Endothelial cell of umbilical vein (primary cell): ENCODE measurements at regions of chr14 and their contacts with region 1.

Region 1: GRCh38 chr14:69242311-69243224 is 17.4 kb upstream of the GALNT16 start:
- DNase-seq: peak; percentile 71
- H3K4me3 ChIP-seq: no peak overlapping the region
- H3K27ac ChIP-seq: no peak overlapping the region
- H3K4me1 ChIP-seq: no peaks in the 10 kb centered on the region
- H3K27me3 ChIP-seq: no peaks in the 10 kb centered on the region
- CTCF ChIP-seq: peak; percentile 59 to 60
- POLR2A ChIP-seq: no peak

Region 2: GRCh38 chr14:69288011-69288771 is 45.6 kb after region 1 on chr14:
- CTCF ChIA-PET with region 1: interaction called, 17 read pairs
- POLR2A ChIA-PET with region 1: no interaction called
- dilution Hi-C with region 1: no loop called
- intact Hi-C with region 1: loop called (anchors 5 kb)
- DNase-seq: peak; percentile 46
- H3K4me3 ChIP-seq: no peak overlapping the region
- H3K27ac ChIP-seq: no peak overlapping the region
- H3K4me1 ChIP-seq: no peaks in the 10 kb centered on the region
- H3K27me3 ChIP-seq: no peaks in the 10 kb centered on the region
- CTCF ChIP-seq: peak; percentile 9 to 20
- POLR2A ChIP-seq: no peak

Region 3: DNA sequence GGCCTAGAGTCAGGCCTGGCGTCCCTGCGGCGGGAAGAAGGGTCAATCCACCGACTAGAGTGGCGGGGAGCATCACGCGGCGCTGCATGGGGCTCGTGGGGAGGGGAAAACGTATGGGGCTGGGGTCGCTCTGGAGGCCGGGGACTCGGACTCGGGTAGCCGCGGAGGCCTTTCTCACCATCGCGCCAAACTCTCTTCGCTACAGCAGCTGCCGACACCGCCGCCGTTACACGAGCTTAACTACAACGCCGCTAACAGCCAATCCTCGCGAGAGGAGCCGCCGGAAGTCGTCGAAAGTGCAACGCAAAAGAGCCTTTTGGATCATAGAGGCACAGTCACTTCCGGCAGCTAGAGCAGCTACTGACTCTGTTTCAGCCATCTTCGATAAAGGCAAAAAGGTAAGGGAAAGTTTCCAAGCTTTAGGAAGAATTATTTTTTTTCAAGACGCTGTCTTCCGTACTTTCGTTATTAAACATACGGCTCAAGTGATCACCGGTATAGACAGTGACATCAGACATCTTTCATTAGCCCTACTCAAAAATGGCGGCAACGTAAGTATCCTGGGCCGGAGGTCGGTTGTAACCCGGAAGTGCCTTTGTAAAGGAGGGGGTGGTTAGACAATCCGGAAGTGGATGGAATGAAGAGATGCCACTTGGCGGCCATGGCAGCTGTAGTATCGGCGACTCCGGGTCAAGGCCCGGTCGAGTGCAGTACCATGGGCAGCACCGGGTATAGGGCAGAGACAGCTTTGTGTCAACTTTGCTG is 155.7 kb after region 1 on chr14 and contains the starts of genes ERH and SLC39A9:
- CTCF ChIA-PET with region 1: no interaction called
- POLR2A ChIA-PET with region 1: no interaction called
- dilution Hi-C with region 1: no loop called
- intact Hi-C with region 1: loop called (anchors 5 kb)
- DNase-seq: peak; percentile 98
- H3K4me3 ChIP-seq: peak within 1 kb of the TSS; percentile 13 to 100 (median 84)
- H3K27ac ChIP-seq: peak within 1 kb of the TSS; percentile 92
- H3K4me1 ChIP-seq: peaks cover 31% of the 10 kb centered on the region
- H3K27me3 ChIP-seq: no peaks in the 10 kb centered on the region
- CTCF ChIP-seq: no peak
- POLR2A ChIP-seq: peak; percentile 84
- total RNA-seq, gene ERH: 263 and 273 TPM in 2 replicates
- total RNA-seq, gene SLC39A9: 52.1 and 55.2 TPM in 2 replicates

Region 4: GRCh38 chr14:69475194-69475818 is 232.7 kb after region 1 on chr14:
- CTCF ChIA-PET with region 1: interaction called, 9 read pairs
- POLR2A ChIA-PET with region 1: no interaction called
- dilution Hi-C with region 1: no loop called
- intact Hi-C with region 1: loop called (anchors 5 kb)
- DNase-seq: peak; percentile 25
- H3K4me3 ChIP-seq: no peak overlapping the region
- H3K27ac ChIP-seq: no peak overlapping the region
- H3K4me1 ChIP-seq: no peaks in the 10 kb centered on the region
- H3K27me3 ChIP-seq: peaks cover 0 to 3% of the 10 kb centered on the region in 2 experiments
- CTCF ChIP-seq: peak; percentile 25 to 34
- POLR2A ChIP-seq: no peak